B cell (primary cell): ENCODE measurements at regions of chr9 and their contacts with region 1.

Region 1: GRCh38 chr9:124285903-124286291 is 28.1 kb downstream of the NEK6 start:
- DNase-seq: peak; percentile 85
- ATAC-seq: peak; percentile 42
- H3K4me3 ChIP-seq: peak overlapping the region in 2 of 5 experiments; percentile 7 to 48
- H3K4me3 Mint-ChIP-seq: peak overlapping the region; percentile 84
- H3K27ac ChIP-seq: peak overlapping the region; percentile 73 to 86
- H3K27ac Mint-ChIP-seq: peak overlapping the region; percentile 96
- H3K4me1 ChIP-seq: peaks cover 63 to 88% of the 10 kb centered on the region in 2 donors
- H3K4me1 Mint-ChIP-seq: peaks cover 87% of the 10 kb centered on the region
- H3K27me3 ChIP-seq: no peaks in the 10 kb centered on the region
- H3K27me3 Mint-ChIP-seq: no peaks in the 10 kb centered on the region
- CTCF ChIP-seq: no peak

Region 2: GRCh38 chr9:124116683-124117363 is 169.1 kb before region 1 on chr9:
- CTCF ChIA-PET with region 1: no interaction called
- POLR2A ChIA-PET with region 1: no interaction called
- intact Hi-C with region 1: no loop called
- DNase-seq: no peak
- ATAC-seq: no peak
- H3K4me3 ChIP-seq: no peak overlapping the region
- H3K4me3 Mint-ChIP-seq: no peak overlapping the region
- H3K27ac ChIP-seq: no peak overlapping the region
- H3K27ac Mint-ChIP-seq: no peak overlapping the region
- H3K4me1 ChIP-seq: no peaks in the 10 kb centered on the region
- H3K4me1 Mint-ChIP-seq: no peaks in the 10 kb centered on the region
- H3K27me3 ChIP-seq: peaks cover 0 to 12% (median 4%) of the 10 kb centered on the region in 4 experiments
- H3K27me3 Mint-ChIP-seq: peaks cover 22% of the 10 kb centered on the region
- CTCF ChIP-seq: no peak

Region 3: GRCh38 chr9:124257844-124258606 is 27.9 kb before region 1 on chr9 and contains the start of gene NEK6:
- CTCF ChIA-PET with region 1: interaction called, 5 read pairs
- POLR2A ChIA-PET with region 1: interaction called, 7 read pairs
- intact Hi-C with region 1: loop called (anchors 1 kb)
- DNase-seq: peak; percentile 75
- ATAC-seq: peak; percentile 60
- H3K4me3 ChIP-seq: peak within 1 kb of the TSS; percentile 65 to 97 (median 81)
- H3K4me3 Mint-ChIP-seq: peak within 1 kb of the TSS; percentile 100
- H3K27ac ChIP-seq: peak within 1 kb of the TSS; percentile 49 to 71
- H3K27ac Mint-ChIP-seq: peak within 1 kb of the TSS; percentile 98
- H3K4me1 ChIP-seq: peaks cover 42 to 67% of the 10 kb centered on the region in 2 donors
- H3K4me1 Mint-ChIP-seq: peaks cover 71% of the 10 kb centered on the region
- H3K27me3 ChIP-seq: no peaks in the 10 kb centered on the region
- H3K27me3 Mint-ChIP-seq: no peaks in the 10 kb centered on the region
- CTCF ChIP-seq: no peak
- total RNA-seq, gene NEK6: 63.1 and 66.3 TPM in 2 replicates